A549 (cell line): ENCODE measurements at regions of chr9 and their contacts with region 1.

Region 1: DNA sequence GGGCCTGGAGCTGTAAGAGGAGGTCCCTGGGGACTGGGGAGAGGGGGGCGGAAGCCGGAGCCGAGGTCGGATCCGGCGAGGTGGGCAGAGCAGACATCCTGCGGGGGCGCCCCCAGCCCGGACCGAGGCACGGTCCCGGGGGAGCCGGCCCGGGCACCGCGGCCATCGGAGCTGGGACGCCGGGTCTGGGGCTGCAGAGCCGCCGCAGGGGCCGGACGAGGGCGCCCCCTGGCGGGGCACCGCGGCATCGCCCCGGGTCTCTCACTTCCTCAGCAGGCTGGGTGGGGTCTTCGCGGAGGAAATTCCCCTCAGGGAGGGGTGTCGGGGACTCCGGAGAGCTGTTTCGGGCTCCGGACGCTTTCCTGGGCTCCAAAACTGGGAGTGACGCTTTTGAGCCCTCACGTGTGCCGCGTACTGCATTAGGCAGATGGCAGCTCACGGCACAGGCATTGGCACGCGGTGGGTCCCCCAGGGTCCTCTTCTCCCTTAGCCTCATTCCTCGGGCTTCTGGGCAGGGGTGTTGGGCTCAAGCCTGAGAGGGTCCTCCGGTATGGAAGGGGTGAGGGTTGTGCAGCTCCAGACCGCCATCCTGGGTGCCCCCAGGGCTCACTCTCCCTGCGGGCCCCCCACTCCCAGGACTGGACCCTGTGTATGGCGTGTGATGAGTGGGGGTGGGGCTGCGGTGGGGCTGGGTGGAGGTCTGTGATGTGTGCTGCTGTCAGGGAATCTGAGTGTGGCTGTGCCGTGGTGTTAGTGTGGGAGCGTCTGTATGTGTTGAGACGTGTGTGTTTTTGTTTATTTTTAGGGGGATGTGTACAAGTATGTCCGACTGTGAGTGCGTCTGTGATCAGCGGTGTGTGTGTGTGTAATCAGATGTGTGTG is 29.6 kb downstream of the LHX2 start:
- DNase-seq: peak in 1 of 2 experiments; percentile 82
- ATAC-seq: peak; percentile 64 to 82
- H3K4me3 ChIP-seq: peak overlapping the region; percentile 60
- H3K27ac ChIP-seq: peak overlapping the region; percentile 76 to 85
- H3K4me1 ChIP-seq: peaks cover 11% of the 10 kb centered on the region; the same call in 2 of the 3 replicates
- CTCF ChIP-seq: peak; percentile 97
- EP300 ChIP-seq: no peak
- POLR2A ChIP-seq: no peak
- RAD21 ChIP-seq: peak; percentile 69 to 96

Region 2: GRCh38 chr9:123401879-123402513 is 639.2 kb before region 1 on chr9:
- CTCF ChIA-PET with region 1: interaction called, 23 read pairs
- POLR2A ChIA-PET with region 1: no interaction called
- DNase-seq: peak; percentile 52 to 90
- ATAC-seq: peak; percentile 84 to 93
- H3K4me3 ChIP-seq: no peak overlapping the region
- H3K27ac ChIP-seq: no peak overlapping the region
- H3K4me1 ChIP-seq: no peaks in the 10 kb centered on the region
- CTCF ChIP-seq: peak; percentile 64
- EP300 ChIP-seq: no peak
- POLR2A ChIP-seq: no peak
- RAD21 ChIP-seq: peak; percentile 70 to 84

Region 3: DNA sequence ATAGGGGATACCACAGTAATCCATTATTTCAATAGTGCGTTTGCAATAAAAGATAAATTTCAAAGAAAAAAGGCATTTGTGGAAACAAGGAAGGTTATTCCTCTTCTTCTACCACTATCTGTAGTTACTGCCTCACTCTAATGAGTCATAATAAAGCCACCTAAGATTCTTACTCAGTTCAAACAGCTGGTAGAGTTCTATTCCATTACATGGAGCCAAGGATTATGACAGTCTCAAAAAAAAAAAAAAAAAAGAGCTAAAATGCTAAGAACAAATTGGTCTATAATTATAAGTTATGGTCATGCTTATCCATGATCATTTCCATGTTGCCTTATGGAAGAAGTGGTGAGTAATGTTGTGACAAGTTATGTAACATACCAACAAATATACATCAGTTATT is 157.5 kb before region 1 on chr9:
- CTCF ChIA-PET with region 1: no interaction called
- POLR2A ChIA-PET with region 1: no interaction called
- DNase-seq: no peak
- ATAC-seq: no peak
- H3K4me3 ChIP-seq: no peak overlapping the region
- H3K27ac ChIP-seq: no peak overlapping the region
- H3K4me1 ChIP-seq: peaks cover 18% of the 10 kb centered on the region; the same call in 2 of the 3 replicates
- CTCF ChIP-seq: no peak
- EP300 ChIP-seq: no peak
- POLR2A ChIP-seq: no peak
- RAD21 ChIP-seq: no peak

Region 4: DNA sequence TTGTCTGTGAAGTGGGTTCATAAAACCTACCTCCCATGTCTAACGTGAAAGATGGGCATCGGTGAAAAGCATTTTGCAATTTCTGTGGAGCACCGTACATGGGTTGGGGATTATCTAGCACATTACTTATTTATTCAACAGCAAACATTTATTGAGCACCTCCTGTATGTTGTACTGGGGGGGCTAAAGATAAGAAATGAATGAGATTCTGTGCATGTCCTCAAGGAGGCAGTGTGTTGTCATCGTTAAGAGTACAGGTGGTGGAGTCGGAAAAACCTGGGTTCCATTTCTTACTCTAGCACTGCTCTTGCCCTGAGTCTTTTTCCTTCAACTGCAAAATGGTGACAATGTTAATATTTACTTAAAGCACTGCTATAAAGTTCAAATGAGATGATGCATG is 80.8 kb before region 1 on chr9:
- CTCF ChIA-PET with region 1: interaction called, 11 read pairs
- POLR2A ChIA-PET with region 1: interaction called, 3 read pairs
- DNase-seq: no peak
- ATAC-seq: no peak; a peak in 1 of 6 replicates
- H3K4me3 ChIP-seq: no peak overlapping the region
- H3K27ac ChIP-seq: no peak overlapping the region
- H3K4me1 ChIP-seq: peaks cover 7% of the 10 kb centered on the region; the same call in 1 of the 3 replicates
- CTCF ChIP-seq: 0 out of 3 replicates have a peak, but pooled peaks have one; percentile 11
- EP300 ChIP-seq: no peak
- POLR2A ChIP-seq: no peak
- RAD21 ChIP-seq: peak in 1 of 2 experiments; percentile 14; a peak in 1 of 5 replicates

Region 5: DNA sequence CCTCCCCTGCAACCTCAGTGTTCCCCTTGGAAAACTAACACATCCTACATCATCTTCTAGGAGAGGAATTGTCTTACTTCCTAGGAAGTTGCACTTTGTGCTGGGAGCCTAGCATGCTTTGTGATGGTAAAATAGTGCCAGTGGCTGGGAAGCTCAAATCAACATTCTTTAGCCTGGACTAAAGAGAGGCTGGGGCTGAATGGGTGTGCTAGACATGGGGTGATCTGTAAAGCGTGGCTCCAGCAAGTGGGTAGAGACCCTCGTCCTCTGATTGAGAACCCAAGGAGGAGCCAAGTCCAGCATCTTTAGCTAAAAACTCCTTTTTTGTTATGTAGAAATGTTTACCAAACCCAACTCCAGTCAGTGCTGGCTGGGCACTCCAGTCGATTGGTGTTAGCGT is 35.8 kb before region 1 on chr9:
- CTCF ChIA-PET with region 1: interaction called, 22 read pairs
- POLR2A ChIA-PET with region 1: no interaction called
- DNase-seq: no peak
- ATAC-seq: no peak
- H3K4me3 ChIP-seq: no peak overlapping the region
- H3K27ac ChIP-seq: no peak overlapping the region
- H3K4me1 ChIP-seq: peaks cover 8% of the 10 kb centered on the region; the same call in 2 of the 3 replicates
- CTCF ChIP-seq: no peak
- EP300 ChIP-seq: no peak
- POLR2A ChIP-seq: no peak
- RAD21 ChIP-seq: no peak

Region 6: GRCh38 chr9:124024107-124024506 is 17.1 kb before region 1 on chr9:
- CTCF ChIA-PET with region 1: interaction called, 11 read pairs
- POLR2A ChIA-PET with region 1: no interaction called
- DNase-seq: no peak
- ATAC-seq: no peak
- H3K4me3 ChIP-seq: no peak overlapping the region
- H3K27ac ChIP-seq: no peak overlapping the region
- H3K4me1 ChIP-seq: no peaks in the 10 kb centered on the region
- CTCF ChIP-seq: no peak
- EP300 ChIP-seq: no peak
- POLR2A ChIP-seq: no peak
- RAD21 ChIP-seq: no peak

Region 7: GRCh38 chr9:124118894-124119293 is 77.7 kb after region 1 on chr9:
- CTCF ChIA-PET with region 1: no interaction called
- POLR2A ChIA-PET with region 1: no interaction called
- DNase-seq: no peak
- ATAC-seq: no peak
- H3K4me3 ChIP-seq: no peak overlapping the region
- H3K27ac ChIP-seq: no peak overlapping the region
- H3K4me1 ChIP-seq: no peaks in the 10 kb centered on the region
- CTCF ChIP-seq: no peak
- EP300 ChIP-seq: no peak
- POLR2A ChIP-seq: no peak
- RAD21 ChIP-seq: no peak